Endothelial cell of umbilical vein (primary cell): ENCODE measurements at regions of chr2 and their contacts with region 1.

Region 1: DNA sequence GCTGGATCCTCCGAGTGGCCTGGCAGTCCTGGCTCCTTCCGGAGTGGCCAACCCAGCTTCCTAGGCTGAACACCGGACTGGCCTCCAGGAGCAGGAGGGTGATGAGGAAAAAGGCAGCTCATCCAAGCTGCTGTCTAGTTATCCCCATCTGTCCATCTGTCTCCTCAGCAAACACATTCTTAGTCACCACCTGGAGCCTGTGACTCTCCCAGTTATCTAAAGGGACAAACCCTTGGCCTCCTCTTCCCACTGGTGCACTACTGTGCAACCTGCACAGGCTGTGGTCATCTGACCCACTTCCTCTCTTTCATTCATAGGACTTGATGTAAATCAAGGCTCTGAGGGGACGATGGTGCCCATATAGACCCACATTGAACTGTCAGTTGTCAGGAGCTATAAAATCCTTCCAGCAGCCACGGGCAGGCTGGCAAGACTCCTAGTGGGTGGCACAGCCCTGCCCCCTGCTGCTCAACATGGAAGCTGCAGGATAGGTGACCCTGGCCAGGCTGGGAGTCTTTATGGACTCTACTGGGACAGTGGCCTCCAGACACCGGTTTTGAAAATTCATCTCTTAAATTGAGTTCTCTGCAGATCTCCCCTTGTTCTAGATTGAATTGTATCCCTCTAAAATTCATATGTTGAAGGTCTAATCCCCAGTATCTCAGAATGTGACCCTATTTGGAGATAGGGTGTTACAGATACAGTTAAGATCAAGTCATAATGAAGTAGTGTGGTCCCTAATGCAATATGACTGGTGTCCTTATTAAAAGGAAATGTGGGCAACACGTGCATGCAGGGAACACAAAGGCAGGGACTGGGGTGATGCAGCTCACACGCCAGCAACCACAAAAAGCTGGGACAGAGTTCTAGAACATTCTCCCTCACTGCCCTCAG is 29.3 kb upstream of the DUSP2 start:
- DNase-seq: peak; percentile 65
- H3K4me3 ChIP-seq: no peak overlapping the region
- H3K27ac ChIP-seq: no peak overlapping the region
- H3K4me1 ChIP-seq: no peaks in the 10 kb centered on the region
- H3K27me3 ChIP-seq: no peaks in the 10 kb centered on the region
- CTCF ChIP-seq: peak; percentile 78 to 90
- POLR2A ChIP-seq: no peak

Region 2: GRCh38 chr2:96116879-96117697 is 57.4 kb before region 1 on chr2:
- CTCF ChIA-PET with region 1: interaction called, 19 read pairs
- POLR2A ChIA-PET with region 1: no interaction called
- dilution Hi-C with region 1: no loop called
- intact Hi-C with region 1: loop called (anchors 2 kb)
- DNase-seq: peak; percentile 17
- H3K4me3 ChIP-seq: peak overlapping the region in 1 of 3 experiments; percentile 12
- H3K27ac ChIP-seq: no peak overlapping the region
- H3K4me1 ChIP-seq: no peaks in the 10 kb centered on the region
- H3K27me3 ChIP-seq: peaks cover 7 to 9% of the 10 kb centered on the region in 2 experiments
- CTCF ChIP-seq: peak; percentile 65 to 93
- POLR2A ChIP-seq: no peak

Region 3: DNA sequence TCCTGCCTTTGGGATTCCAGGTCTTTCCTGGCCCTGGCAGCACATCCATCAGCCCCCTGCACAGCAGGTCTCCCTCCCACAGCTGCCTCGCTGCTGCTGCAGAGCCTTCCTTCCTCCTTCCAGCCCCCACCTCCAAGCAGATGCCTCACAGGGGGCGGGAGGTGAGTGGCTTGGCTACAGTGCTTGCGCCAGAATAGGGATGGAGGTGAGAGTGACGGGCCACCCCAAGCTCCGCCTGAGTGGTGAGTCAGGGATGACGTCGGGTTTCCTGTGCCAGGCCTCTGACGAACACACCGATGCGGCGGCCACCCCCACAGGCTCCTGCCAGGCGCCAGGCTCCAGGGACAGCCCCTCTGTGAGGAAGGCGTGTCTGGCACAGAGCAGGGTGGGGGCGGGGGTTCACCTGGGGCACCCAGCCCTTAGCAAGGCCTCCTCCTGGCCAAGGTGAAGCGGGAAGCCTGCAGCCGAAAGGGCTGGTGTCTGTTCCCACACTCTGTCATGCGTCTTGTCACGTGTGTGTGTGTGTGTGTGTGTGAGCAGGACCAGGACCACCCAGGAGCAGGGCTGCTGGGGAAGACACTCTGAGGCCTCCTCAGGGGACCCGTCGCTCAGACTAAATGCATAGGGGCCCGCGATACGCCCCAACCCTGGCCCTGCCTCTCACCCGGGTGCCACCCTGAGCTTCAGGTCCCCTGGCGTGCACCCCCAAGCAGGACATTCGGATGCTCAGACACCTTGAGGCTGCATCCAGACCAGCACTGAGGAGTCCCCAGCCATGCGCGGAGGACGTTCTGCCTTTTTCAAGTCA is 25.9 kb before region 1 on chr2:
- CTCF ChIA-PET with region 1: interaction called, 26 read pairs
- POLR2A ChIA-PET with region 1: no interaction called
- dilution Hi-C with region 1: no loop called
- intact Hi-C with region 1: no loop called
- DNase-seq: peak; percentile 74
- H3K4me3 ChIP-seq: no peak overlapping the region
- H3K27ac ChIP-seq: peak overlapping the region; percentile 16
- H3K4me1 ChIP-seq: no peaks in the 10 kb centered on the region
- H3K27me3 ChIP-seq: no peaks in the 10 kb centered on the region
- CTCF ChIP-seq: no peak
- POLR2A ChIP-seq: no peak

Region 4: DNA sequence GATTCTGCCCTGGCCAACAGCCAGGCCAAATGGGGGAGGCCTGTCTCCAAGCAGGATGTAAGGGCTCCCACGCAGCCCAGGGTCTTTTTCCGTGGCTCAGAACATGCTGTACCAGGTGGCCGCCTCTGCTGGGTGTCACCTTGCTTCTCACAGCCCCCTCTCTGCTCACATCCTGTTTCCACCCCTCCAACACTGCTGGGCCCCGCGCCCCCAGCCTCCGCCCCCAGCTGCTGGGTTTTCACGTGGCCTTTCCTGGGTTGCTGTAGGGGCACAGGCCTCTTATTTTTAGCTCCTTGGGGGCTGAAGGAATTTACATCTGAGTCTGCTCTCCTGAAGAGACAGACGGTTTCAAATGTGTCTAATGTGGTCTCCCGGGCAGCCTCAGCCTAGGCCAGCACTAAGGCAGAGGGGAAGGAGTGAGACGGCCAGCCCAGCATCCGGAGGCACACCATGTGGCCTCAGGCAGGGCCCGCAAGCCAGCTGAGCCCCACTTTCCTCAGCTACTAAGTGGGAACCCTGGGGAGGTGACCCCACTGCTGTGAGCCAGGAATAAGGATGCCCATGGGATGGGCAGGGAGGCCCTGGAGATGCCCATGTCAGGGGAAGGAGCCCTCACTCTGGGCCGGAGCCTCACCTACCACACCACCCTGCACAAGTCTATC is 10.6 kb before region 1 on chr2:
- CTCF ChIA-PET with region 1: interaction called, 23 read pairs
- POLR2A ChIA-PET with region 1: no interaction called
- dilution Hi-C with region 1: no loop called
- intact Hi-C with region 1: no loop called
- DNase-seq: no peak
- H3K4me3 ChIP-seq: no peak overlapping the region
- H3K27ac ChIP-seq: no peak overlapping the region
- H3K4me1 ChIP-seq: no peaks in the 10 kb centered on the region
- H3K27me3 ChIP-seq: peaks cover 4% of the 10 kb centered on the region in 2 experiments
- CTCF ChIP-seq: no peak
- POLR2A ChIP-seq: no peak

Region 5: GRCh38 chr2:96260404-96261260 is 86.1 kb after region 1 on chr2:
- CTCF ChIA-PET with region 1: interaction called, 14 read pairs
- POLR2A ChIA-PET with region 1: no interaction called
- dilution Hi-C with region 1: no loop called
- intact Hi-C with region 1: no loop called
- DNase-seq: peak; percentile 94
- H3K4me3 ChIP-seq: no peak overlapping the region
- H3K27ac ChIP-seq: peak overlapping the region; percentile 76
- H3K4me1 ChIP-seq: peaks cover 47% of the 10 kb centered on the region
- H3K27me3 ChIP-seq: no peaks in the 10 kb centered on the region
- CTCF ChIP-seq: peak; percentile 42 to 65
- POLR2A ChIP-seq: no peak

Region 6: GRCh38 chr2:96427917-96428316 is 253.4 kb after region 1 on chr2:
- CTCF ChIA-PET with region 1: no interaction called
- POLR2A ChIA-PET with region 1: no interaction called
- dilution Hi-C with region 1: no loop called
- intact Hi-C with region 1: no loop called
- DNase-seq: peak; percentile 56
- H3K4me3 ChIP-seq: no peak overlapping the region
- H3K27ac ChIP-seq: no peak overlapping the region
- H3K4me1 ChIP-seq: peaks cover 4% of the 10 kb centered on the region
- H3K27me3 ChIP-seq: peaks cover 5 to 7% of the 10 kb centered on the region in 2 experiments
- CTCF ChIP-seq: no peak
- POLR2A ChIP-seq: no peak